ENCODE measurements at regions of chr1 and their contacts with region 1.

Region 1: GRCh38 chr1:151024540-151025146 is 11.7 kb upstream of the BNIPL start:
- DNase-seq: peak; percentile 88
- ATAC-seq: peak; percentile 91 to 93

Region 2: GRCh38 chr1:150925816-150926741 is 98.6 kb before region 1 on chr1 and contains the start of gene SETDB1:
- intact Hi-C with region 1: no loop called
- DNase-seq: peak; percentile 96
- ATAC-seq: peak; percentile 98
- total RNA-seq, gene SETDB1: 16.3 to 19.9 TPM

Region 3: DNA sequence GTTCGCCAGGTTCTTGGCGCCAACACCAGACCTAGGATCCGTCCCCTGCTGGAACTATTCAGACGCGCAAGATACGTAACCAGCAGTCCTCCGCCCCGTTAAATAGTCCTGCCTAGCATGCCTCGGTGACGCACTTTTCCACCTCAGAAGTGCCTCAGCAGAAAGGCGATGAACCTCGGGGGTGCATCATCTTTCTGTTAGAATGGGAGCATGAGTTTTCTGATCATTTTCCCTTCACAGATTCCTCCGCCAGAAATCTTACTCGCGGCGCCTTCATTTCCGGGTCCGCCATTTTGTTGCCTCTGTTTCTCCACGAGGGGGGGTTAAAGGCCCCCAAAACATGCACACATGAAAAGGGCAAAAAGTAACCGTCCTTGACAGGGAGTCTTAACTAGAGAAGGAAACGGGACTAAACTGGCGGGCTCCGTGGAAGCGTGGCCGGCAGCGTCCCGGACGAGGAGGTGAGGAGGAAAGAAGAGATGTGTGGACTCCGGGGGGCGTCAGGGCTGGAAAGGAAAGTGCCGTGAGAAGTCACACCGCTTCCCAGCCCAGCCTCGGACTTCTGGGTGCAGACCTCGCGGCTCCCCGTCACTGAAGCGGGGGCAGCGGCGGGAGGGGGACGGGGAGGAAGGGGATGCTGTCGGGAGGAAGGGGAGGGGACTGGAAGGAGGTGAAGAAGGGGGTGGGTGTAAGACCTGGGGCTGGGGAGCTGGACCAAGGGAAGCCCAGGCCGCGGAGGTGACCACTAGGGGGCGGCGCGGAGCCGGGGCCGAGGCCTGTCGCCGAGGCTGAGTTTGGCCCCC is 46.0 kb after region 1 on chr1 and contains the start of gene GABPB2:
- intact Hi-C with region 1: loop called in 1 of 2 experiments (anchors 2 kb)
- DNase-seq: peak; percentile 95
- ATAC-seq: peak; percentile 94 to 96
- total RNA-seq, gene GABPB2: 13.4 to 15.6 TPM

Region 4: GRCh38 chr1:151156515-151156819 is 131.8 kb after region 1 on chr1 and contains the start of gene TNFAIP8L2:
- intact Hi-C with region 1: loop called in 1 of 2 experiments (anchors 5 kb)
- DNase-seq: peak; percentile 64
- ATAC-seq: peak; percentile 58 to 74
- total RNA-seq, gene TNFAIP8L2: 2.1 to 5.3 TPM

Measured in left cardiac atrium (tissue), 4 donors.